ENCODE measurements at regions of chr12 and their contacts with region 1.

Region 1: DNA sequence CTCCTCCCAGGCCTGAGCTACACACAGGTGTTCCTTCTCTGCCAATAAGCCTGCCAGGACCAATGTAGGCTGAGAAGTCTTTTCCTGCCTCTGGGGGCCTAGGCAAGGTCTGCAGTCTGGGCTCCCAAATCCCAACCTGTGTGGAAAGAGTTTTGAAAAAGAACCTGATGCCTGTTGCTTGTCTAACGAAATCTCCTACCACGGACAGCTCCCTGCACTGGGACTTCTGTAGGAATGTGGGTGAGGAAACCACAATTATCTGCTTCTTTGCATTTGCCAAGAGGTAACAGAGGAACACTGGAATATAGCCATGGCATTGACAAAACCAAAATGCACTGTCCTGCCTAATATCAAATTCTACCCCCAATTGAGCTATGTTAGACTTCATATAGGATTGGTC is 877.0 kb upstream of the TMEM132C start:
- DNase-seq: no peak
- H3K4me3 ChIP-seq: no peak overlapping the region
- H3K27ac ChIP-seq: no peak overlapping the region
- H3K4me1 ChIP-seq: no peaks in the 10 kb centered on the region
- H3K27me3 ChIP-seq: peaks cover 0 to 6% of the 10 kb centered on the region in 2 donors
- CTCF ChIP-seq: no peak

Region 2: DNA sequence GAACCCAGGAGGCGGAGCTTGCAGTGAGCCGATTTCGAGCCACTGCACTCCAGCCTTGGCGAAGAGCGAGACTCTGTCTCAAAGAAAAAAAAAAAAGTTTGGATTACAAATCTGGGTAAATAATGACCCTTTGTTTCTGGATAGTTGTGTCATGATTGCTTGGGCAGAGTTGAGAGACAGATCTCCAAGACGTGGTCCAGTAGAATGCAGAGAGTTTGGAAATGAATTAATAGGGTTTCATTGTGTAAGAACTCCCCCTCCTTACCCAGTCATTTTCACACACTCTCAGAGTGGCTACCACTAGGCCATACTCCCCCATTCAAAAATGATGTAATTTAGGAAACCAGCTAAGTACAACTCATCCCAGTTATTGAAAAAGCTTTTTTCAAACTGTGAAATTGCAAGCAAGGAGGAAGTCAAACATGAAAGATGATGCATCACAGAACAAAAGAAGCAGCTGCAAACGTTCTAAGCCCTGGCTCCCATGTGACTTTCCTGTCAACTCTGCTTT is 992.8 kb before region 1 on chr12:
- intact Hi-C with region 1: loop called (anchors 5 kb)
- DNase-seq: no peak
- H3K4me3 ChIP-seq: no peak overlapping the region
- H3K27ac ChIP-seq: no peak overlapping the region
- H3K4me1 ChIP-seq: no peaks in the 10 kb centered on the region
- H3K27me3 ChIP-seq: no peaks in the 10 kb centered on the region
- CTCF ChIP-seq: no peak

Region 3: GRCh38 chr12:127293507-127294310 is 96.2 kb before region 1 on chr12:
- intact Hi-C with region 1: no loop called
- DNase-seq: peak in 1 of 2 donors; percentile 41
- H3K4me3 ChIP-seq: no peak overlapping the region
- H3K27ac ChIP-seq: no peak overlapping the region
- H3K4me1 ChIP-seq: no peaks in the 10 kb centered on the region
- H3K27me3 ChIP-seq: no peaks in the 10 kb centered on the region
- CTCF ChIP-seq: peak; percentile 30 to 36

Region 4: GRCh38 chr12:127416796-127417195 is 26.9 kb after region 1 on chr12:
- intact Hi-C with region 1: no loop called
- DNase-seq: no peak
- H3K4me3 ChIP-seq: no peak overlapping the region
- H3K27ac ChIP-seq: no peak overlapping the region
- H3K4me1 ChIP-seq: no peaks in the 10 kb centered on the region
- H3K27me3 ChIP-seq: no peaks in the 10 kb centered on the region
- CTCF ChIP-seq: no peak

Measured in tibial artery (tissue), 4 donors.